Cardiac septum (tissue), 1 donor: ENCODE measurements at regions of chr3 and their contacts with region 1.

Region 1: DNA sequence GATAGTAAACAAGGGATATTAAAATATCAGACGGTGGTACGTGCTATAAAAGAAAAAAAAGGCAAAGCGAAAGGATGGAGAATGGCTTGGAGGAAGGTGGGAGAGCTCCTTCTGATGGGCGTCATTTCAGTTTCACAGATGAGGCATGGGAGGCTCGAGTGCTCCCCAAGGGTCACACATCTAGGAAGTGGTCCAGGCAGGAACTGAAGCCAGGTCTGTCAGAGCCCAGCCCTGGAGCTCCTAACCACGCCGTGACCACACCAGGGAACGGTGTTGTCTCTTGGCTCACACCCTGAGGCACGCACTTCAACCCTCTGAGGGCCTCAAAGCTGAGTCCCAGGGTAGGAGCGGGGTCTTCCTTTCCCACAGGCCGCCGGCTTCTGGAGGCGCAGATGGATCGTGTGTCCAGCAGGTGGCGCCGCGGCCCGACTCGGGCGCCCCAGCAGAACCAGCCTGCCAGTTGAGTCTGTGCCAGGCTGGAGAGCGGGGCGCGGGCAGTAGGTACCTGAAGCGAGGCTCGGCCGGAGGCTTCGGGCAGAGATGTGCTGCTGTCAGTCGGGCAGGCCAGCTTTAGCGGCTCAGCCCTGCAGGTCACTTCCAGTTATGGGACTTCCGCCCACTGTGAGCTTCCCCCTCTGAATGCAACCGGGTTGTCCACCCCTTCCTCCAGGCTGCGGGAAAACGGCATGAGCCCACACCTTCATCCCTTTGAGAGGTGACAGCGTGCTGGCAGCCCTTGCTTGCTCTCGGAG is 68.1 kb downstream of the SLC6A1 start:
- DNase-seq: peak; percentile 84

Region 2: GRCh38 chr3:10758304-10759061 is 302.2 kb before region 1 on chr3:
- intact Hi-C with region 1: loop called (anchors 2 kb)
- DNase-seq: no peak

Region 3: DNA sequence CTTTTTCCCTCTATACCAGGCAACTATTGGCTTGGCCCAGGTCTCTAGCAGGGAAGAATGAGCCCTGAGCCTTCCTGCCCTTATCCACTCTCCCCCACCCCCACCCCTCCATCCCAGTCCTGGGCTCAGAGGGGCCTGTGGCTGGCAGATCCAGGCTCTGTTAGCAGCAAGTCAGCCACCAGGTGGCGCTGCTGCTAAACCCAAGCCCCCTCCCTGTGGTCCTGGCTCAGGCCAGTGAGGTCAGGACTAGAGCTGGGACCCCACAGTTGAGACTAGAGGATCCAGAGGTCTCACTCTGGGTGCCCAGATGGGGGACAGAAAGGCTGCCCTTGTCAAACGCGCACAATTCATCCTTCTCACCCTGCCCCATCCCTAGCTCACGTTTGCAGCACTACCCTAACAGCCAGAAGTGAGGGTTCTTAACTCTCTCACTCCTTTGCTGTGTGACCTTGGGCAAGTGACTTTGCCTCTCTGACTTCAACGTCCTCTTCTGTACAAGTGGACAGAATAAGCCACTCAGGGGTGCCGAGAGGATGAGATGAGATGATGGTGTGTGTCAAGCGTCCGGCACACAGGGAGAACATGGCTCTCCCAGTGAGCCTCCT is 114.9 kb before region 1 on chr3:
- intact Hi-C with region 1: loop called (anchors 1 kb)
- DNase-seq: peak; percentile 85

Region 4: DNA sequence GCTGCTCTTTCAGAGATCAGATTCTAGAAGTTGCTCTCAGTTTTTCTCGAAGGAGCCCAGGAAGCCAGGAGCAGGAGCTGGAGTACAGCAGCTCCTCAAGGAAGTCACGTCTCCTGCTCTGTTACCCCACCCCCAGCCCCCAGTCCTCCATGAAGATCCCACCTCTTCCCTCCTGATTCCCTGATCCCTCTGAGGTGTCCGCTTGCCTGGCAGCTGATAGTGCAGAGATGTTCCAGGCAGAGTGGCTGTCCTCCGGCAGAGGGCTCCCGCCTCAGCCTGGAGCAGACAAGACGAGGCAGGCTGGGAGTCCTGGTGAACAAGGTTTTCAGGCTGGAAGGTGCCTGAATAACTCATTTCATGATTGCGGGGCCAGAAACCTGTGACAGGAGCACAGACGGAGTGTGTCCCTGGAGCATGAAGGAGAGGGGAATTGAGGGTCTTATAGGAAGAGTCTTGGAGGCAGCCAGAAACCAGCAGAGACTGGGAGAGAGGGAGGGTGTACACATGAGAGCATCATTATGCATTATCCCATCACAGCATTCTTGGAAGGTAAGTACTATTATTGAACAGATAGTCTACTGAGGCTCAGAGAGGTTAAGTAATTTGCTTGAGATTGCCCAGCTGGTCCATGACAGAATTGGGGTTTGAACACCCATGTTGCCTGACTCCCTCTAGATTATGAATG is 94.8 kb after region 1 on chr3:
- intact Hi-C with region 1: loop called (anchors 2 kb)
- DNase-seq: peak; percentile 83

Region 5: GRCh38 chr3:11206316-11206715 is 145.6 kb after region 1 on chr3:
- intact Hi-C with region 1: loop called (anchors 2 kb)
- DNase-seq: no peak

Region 6: DNA sequence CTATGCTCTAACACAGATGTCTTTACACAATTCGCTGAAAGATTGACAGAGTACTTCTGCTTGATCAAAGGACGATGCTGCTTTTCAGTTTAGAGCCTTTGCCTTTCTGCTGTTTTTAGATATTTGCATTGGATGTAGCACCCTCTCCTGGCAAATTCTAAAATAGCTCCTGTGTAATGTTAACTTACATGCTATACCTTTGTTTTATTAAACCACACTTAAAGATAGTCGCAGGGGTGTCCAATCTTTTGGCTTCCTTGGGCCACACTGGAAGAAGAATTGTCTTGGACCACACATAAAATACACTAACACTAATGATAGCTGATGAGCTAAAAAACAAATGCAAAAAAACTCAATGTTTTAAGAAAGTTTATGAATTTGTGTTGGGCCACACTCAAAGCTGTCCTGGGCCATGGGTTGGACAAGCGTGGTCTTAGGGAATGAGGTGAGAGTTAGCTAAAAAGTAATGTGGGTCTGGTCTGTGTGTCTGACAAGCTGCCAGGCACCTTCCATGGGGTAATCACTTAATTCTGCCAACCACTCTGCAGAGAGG is 274.5 kb after region 1 on chr3:
- intact Hi-C with region 1: loop called (anchors 10 kb)
- DNase-seq: no peak

Region 7: DNA sequence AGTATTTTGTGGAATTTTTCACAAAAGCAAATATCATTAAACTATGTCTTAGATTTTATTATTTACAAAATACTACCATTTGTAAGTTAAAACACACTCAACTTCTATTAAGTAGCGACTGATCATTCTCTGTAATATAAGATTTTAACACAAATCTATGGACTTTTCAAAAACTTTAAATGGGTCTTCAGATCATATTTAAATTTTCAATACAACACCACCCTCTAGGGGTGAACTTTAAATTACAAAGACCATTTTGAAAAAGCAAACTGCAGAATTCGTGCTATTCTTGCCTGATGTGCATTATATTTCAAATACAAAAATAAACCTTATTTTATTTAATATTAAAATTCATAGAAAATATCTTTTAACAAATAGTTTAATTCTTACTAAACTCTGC is 591.2 kb after region 1 on chr3:
- intact Hi-C with region 1: loop called (anchors 10 kb)
- DNase-seq: no peak